Aorta (tissue), 5 donors: ENCODE measurements at regions of chrX and their contacts with region 1.

Region 1: DNA sequence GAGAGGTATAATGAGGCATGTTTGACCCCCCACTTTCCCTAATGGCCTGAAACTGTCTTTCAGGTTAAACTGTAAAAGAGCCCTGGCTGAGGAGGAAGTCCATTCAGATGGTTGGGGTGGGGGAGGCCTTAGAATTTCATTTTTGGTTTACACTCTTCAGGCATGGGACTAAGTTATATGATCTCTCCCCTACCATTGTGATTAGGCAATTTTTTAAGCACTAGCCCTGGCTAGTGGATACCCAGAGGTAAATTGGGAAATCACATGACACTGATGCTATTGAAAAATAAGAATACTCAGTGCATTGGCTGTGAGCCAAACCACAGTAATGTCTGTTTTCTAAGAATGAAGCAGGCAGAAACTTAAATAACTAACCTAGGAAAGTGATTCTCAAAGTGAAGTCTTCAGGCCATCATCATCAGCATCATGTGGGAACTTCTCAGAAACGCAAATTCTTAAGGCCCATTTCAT is 149.7 kb downstream of the RRAGB start:
- DNase-seq: no peak
- ATAC-seq: no peak
- H3K4me3 ChIP-seq: no peak overlapping the region
- H3K27ac ChIP-seq: no peak overlapping the region
- H3K4me1 ChIP-seq: no peaks in the 10 kb centered on the region
- H3K27me3 ChIP-seq: no peaks in the 10 kb centered on the region

Region 2: GRCh38 chrX:55731826-55732225 is 135.4 kb before region 1 on chrX:
- intact Hi-C with region 1: no loop called
- DNase-seq: no peak
- ATAC-seq: no peak
- H3K4me3 ChIP-seq: no peak overlapping the region
- H3K27ac ChIP-seq: no peak overlapping the region
- H3K4me1 ChIP-seq: no peaks in the 10 kb centered on the region
- H3K27me3 ChIP-seq: no peaks in the 10 kb centered on the region

Region 3: GRCh38 chrX:55801805-55802204 is 65.4 kb before region 1 on chrX:
- intact Hi-C with region 1: loop called in 1 of 2 experiments (anchors 10 kb)
- DNase-seq: no peak
- ATAC-seq: no peak
- H3K4me3 ChIP-seq: no peak overlapping the region
- H3K27ac ChIP-seq: no peak overlapping the region
- H3K4me1 ChIP-seq: no peaks in the 10 kb centered on the region
- H3K27me3 ChIP-seq: no peaks in the 10 kb centered on the region

Region 4: GRCh38 chrX:55818687-55819375 is 48.4 kb before region 1 on chrX:
- intact Hi-C with region 1: no loop called
- DNase-seq: no peak
- ATAC-seq: no peak
- H3K4me3 ChIP-seq: no peak overlapping the region
- H3K27ac ChIP-seq: no peak overlapping the region
- H3K4me1 ChIP-seq: no peaks in the 10 kb centered on the region
- H3K27me3 ChIP-seq: no peaks in the 10 kb centered on the region

Region 5: GRCh38 chrX:55919367-55920221 is 52.4 kb after region 1 on chrX:
- intact Hi-C with region 1: loop called in 1 of 2 experiments (anchors 10 kb)
- DNase-seq: no peak
- ATAC-seq: no peak
- H3K4me3 ChIP-seq: no peak overlapping the region
- H3K27ac ChIP-seq: no peak overlapping the region
- H3K4me1 ChIP-seq: no peaks in the 10 kb centered on the region
- H3K27me3 ChIP-seq: no peaks in the 10 kb centered on the region